ENCODE measurements at regions of chr7 and their contacts with region 1.

Region 1: DNA sequence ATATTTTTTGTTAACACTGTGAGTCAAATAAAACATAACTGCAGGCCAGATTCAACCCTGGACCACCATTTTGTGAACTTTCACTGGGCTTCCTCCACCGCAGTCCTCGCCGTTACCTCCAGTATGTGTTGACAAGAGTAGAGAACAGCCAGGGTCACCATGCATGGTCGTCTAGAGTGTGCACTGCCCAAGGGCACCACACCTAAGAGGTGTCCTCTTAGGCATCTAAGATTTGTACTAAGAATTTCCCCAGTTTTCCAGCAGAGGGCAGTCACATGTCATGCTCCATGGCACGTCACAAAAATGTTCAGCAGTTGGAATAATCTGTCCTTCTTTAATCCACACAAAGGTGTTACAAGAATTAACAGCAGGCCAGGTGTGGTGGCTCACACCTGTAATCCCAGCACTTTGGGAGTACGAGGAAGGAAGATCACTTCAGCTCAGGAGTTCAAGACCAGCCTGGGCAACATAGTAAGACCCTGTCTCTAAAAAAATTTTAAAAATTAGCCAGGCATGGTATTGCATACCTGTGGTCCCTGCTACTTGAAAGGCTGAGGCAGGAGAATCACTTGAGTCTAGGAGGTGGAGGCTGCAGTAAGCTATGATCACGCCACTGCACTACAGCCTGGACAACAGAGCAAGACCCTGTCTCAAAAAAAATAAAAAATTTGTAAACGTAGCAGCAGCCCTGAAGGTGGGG is 71.2 kb upstream of the FOXK1 start:
- DNase-seq: peak; percentile 78
- CTCF ChIP-seq: peak; percentile 57

Region 2: DNA sequence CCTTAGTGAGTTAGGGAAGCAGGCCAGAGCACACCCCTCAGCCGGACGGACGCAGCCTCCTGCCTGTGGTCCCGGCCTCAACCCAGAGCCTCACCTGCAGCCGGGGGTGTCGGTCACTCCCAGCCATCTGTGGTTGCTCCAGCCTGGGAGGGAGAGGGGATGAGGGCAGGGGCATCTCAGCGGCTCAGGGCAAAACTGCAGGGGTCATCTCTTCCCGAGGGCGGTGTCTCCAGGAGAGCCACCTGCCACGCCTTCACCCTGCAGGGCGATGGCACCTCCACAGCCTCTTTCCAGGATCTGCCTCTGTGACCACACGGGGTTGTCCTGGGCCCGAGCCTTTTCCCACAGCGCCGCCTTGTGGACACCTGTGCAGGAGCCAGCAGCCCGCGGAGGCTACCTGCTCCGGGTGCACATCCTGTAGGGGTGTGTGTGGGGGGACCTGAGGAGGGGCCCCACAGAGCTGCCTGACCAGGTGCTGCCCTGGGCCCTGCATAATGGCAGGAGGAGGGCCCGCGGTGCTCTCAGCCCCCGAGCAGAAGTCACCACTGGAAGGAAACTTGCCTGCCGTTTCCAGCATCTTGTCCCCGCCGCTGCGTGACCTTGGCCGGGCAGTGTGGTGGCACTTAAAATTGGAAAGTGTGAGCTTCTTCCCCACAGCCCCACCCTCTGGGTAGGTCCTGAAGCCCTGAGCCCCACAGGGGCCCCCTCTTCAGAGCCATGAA is 143.0 kb after region 1 on chr7:
- in situ Hi-C with region 1: loop called (anchors 25 kb)
- DNase-seq: peak; percentile 91
- CTCF ChIP-seq: peak; percentile 97

Region 3: DNA sequence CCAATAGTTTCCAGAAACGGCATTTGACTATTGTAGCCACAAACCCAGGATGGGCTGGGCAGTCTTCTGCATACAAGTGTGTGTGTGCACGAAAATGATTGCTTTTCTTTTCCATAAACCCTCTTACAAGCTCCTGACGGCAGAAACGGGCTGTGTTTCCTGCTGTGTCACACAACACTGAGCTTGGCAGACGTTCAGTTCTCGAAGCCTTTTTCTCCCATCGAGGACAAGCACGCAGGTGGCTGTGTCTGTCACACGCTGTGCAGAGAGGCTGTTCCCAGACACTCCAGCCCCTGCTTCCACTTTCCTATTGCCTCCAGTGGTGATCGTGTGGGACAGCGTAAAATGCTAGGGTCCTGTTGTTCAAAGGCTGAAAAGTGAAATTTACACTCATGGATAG is 466.8 kb after region 1 on chr7:
- in situ Hi-C with region 1: loop called (anchors 25 kb)
- DNase-seq: no peak
- CTCF ChIP-seq: no peak